ENCODE measurements at regions of chr20 and their contacts with region 1.

Region 1: GRCh38 chr20:34495916-34496315 is 20.3 kb upstream of the DYNLRB1 start:
- DNase-seq: no peak
- ATAC-seq: no peak

Region 2: DNA sequence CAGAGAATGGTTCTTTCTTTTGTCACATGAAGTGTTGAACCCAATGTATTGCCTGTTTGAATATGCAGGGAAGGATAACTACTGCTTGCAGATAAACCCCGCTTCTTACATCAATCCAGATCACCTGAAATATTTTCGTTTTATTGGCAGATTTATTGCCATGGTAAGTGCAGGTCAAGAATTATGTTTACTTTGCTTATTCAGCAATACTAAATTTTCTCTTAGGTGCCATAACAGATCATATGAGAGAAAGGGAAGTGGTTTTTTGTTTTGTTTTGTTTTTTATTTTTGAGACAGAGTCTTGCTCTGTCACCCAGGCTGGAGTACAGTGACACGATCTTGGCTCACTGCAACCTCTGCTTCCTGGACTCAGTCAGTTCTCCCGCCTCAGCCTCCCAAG is 16.3 kb before region 1 on chr20:
- intact Hi-C with region 1: loop called (anchors 1 kb)
- DNase-seq: no peak
- ATAC-seq: no peak